Activated CD4-positive, alpha-beta T cell treated with anti-CD3 and anti-CD28 coated beads, Interleukin-2, amount 10 ng/mL, durations not matched to agents 24 days and 14 days (primary cell): ENCODE measurements at regions of chr17 and their contacts with region 1.

Region 1: DNA sequence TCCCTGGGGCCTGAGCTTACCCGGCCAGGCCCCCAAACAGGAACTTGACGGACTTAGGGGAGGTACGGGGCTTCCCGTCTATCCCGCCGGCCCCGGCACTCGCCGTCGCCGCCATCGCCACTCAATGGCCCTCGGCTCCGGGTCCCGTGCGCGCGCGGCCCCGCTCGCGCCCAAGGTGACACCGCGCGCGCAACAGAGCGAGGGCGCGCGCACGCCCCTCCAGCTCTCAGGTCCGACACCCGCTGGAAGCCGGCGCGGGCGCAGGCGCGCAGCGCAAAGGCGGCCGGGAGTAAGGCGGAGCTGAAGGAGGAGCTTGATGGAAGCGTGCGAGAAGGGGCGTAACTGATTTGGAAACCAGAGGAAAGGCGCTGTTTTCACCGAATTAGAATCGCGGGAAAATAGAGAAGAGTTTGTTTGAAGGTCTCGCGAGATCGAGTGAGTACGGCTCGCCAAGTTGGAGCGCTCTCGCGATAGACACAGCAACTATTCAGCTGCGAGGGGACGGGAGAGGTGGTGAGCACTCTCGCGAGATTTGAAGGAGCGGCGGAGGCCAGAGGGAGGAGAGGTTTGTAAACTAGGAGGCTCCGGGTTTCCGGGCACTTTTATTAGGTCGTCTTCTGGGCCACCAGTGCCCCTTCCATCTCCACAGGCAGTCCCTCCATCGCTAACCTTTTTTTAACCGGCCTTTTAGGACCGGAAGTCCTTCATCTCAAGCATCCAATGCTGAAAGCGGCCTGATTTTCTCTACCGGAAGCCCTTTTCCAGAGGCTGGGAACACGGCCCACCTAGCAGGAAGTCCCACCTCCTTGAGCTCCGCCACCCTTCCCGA is at the starts of genes RNF167 and SLC25A11:
- DNase-seq: peak; percentile 100
- H3K4me3 Mint-ChIP-seq: peak within 1 kb of the TSS; percentile 95
- H3K27ac Mint-ChIP-seq: peak within 1 kb of the TSS; percentile 92
- H3K4me1 Mint-ChIP-seq: peaks cover 53% of the 10 kb centered on the region
- H3K27me3 Mint-ChIP-seq: no peaks in the 10 kb centered on the region
- total RNA-seq, gene RNF167: 119 and 125 TPM in 2 replicates
- total RNA-seq, gene SLC25A11: 104 and 106 TPM in 2 replicates

Region 2: DNA sequence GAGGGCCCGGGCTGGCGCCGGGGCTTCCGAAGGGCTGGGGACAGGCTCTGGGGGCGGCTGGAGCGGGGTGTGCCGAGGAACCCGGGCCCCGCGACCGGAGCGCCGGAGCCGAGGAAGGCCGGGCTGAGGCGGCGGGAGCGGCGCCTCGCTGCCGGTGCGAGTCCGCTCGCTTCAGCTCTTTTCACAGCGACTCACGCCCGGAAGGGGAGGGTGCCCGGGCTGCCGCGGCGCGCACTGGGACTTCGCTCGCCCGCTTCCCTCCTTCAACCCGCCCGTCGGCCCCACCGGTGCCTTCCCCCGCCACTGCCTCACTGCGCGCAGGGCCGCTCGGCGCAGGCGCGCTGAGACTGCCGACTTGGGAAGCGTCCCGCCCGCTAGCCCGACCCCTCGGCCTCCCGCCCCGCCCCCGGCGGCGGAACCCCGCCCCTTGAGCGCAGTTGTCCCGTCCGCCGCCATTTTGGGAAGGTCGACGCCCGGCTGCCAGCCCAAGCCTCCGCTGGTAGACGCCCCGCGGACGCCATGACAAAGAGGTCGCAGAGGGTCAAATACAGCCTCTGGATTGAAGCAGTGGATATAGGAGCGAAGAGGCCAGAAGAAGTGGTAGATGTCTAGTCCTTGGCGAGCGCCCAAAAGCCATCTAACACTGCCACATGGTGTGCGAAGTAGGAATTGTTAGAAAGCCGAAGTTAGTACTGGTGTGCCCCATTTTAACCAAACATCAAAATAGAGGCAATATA is 573.5 kb before region 1 on chr17 and contains the start of gene UBE2G1:
- intact Hi-C with region 1: loop called (anchors 10 kb)
- DNase-seq: peak; percentile 99
- H3K4me3 Mint-ChIP-seq: peak within 1 kb of the TSS; percentile 77
- H3K27ac Mint-ChIP-seq: peak within 1 kb of the TSS; percentile 96
- H3K4me1 Mint-ChIP-seq: peaks cover 26% of the 10 kb centered on the region
- H3K27me3 Mint-ChIP-seq: no peaks in the 10 kb centered on the region
- total RNA-seq, gene UBE2G1: 74.8 and 77.3 TPM in 2 replicates

Region 3: DNA sequence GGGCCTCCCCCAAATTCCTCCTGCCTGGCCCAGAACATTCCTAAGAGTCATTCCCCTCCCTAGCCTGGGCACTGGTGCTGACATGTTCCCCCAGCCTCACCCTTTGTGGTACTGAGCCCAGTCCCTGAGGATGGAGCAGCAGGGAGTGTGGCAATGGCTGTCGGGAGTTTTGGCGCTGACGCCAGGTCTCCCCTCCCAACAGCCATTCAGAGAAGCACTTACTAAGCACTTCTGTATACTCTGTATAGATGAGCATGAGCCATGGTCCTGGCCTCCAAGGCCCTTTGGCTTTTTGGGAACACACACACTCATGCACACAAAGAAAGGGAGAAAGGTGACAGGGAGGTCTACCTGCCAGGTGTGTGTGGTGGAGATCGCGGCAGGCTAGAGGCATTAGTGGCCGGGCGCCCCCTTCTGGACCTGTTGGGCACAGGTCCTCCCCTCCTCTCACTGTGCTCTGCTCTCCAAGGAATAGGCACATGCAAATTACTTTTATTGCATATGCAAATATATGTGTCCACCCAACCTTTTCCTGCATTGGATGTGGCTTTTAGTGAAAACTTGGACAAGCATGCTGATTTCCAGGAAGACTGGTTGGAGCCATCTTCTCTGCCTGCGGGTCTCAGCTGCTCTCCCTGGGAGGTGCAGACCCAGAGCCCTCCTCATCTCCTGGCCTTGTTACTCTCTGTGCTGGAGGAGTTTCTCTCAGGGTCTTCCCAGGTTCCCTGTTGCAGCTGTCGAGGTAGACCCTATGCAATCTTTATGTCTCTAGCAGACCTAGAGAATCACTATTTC is 58.1 kb before region 1 on chr17:
- intact Hi-C with region 1: no loop called
- DNase-seq: peak; percentile 90
- H3K4me3 Mint-ChIP-seq: no peak overlapping the region
- H3K27ac Mint-ChIP-seq: no peak overlapping the region
- H3K4me1 Mint-ChIP-seq: peaks cover 3% of the 10 kb centered on the region
- H3K27me3 Mint-ChIP-seq: no peaks in the 10 kb centered on the region

Region 4: DNA sequence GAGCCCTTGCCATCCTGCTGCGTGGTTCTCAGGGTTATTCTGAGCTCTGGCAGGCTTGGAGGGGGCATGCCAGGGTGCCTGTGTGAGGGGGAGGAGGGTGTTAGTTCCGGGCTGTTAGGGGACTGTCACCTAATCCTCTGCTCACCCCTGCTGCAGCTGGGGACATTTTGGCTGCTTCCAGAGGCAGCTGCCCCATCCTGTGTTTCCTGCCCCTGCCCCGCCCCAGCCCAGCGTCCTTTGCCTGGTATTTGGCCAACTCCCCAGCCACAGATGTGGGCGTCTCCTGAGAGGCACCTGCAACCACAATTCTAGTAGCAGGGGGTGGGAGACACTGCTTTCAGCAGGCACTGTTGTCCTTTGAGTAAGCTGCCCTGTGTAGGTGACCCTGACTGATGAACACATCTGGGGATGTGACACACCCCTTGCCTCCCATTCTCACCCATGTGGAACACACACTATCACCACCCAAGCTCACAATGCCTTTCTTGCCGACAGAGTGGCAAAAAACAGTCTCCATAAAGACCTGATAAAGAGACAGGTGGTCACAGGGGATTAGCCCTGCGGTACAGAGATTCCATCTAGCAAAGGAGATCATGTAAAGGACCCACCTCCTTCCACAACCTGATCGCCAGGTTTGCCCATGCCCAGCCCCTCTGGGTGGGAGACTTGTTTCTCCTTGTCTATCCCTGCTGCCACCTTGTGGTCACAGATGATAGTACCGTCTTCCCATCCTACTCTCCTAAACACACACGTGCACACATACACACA is 36.8 kb before region 1 on chr17 and contains the start of gene CHRNE:
- intact Hi-C with region 1: loop called (anchors 2 kb)
- DNase-seq: peak; percentile 93
- H3K4me3 Mint-ChIP-seq: peak within 1 kb of the TSS; percentile 30
- H3K27ac Mint-ChIP-seq: peak within 1 kb of the TSS; percentile 30
- H3K4me1 Mint-ChIP-seq: peaks cover 26% of the 10 kb centered on the region
- H3K27me3 Mint-ChIP-seq: peaks cover 6% of the 10 kb centered on the region
- total RNA-seq, gene CHRNE: 0.42 and 0.64 TPM in 2 replicates

Region 5: DNA sequence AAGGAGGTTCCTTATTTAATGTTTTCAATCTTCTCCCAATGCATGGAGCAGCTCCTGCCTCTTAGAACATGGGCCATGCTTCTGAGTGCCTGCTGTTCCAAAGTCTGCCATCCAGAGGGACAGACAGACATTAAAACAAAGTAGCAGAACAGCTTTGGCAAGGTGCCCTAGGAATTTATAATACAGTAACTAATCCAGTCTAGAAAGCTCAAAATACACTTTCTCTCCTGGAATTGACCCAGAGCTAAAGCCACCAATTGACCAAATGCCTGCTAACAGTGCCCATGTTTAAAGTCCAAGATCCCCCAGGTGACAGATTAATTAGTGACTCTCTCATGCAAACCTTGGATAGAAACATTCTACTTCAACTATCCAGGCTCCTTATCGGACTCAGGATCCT is 26.0 kb before region 1 on chr17:
- intact Hi-C with region 1: no loop called
- DNase-seq: no peak
- H3K4me3 Mint-ChIP-seq: no peak overlapping the region
- H3K27ac Mint-ChIP-seq: no peak overlapping the region
- H3K4me1 Mint-ChIP-seq: peaks cover 3% of the 10 kb centered on the region
- H3K27me3 Mint-ChIP-seq: peaks cover 5% of the 10 kb centered on the region